OCI-LY7 (cell line): ENCODE measurements at regions of chr12 and their contacts with region 1.

Region 1: GRCh38 chr12:45762185-45763110 is 32.9 kb downstream of the ARID2 start:
- DNase-seq: peak; percentile 26
- H3K4me3 ChIP-seq: no peak overlapping the region
- H3K27ac ChIP-seq: no peak overlapping the region
- H3K4me1 ChIP-seq: no peaks in the 10 kb centered on the region
- CTCF ChIP-seq: peak; percentile 84

Region 2: GRCh38 chr12:45713078-45713477 is 49.4 kb before region 1 on chr12:
- CTCF ChIA-PET with region 1: no interaction called
- POLR2A ChIA-PET with region 1: no interaction called
- intact Hi-C with region 1: no loop called
- DNase-seq: no peak
- H3K4me3 ChIP-seq: no peak overlapping the region
- H3K27ac ChIP-seq: no peak overlapping the region
- H3K4me1 ChIP-seq: no peaks in the 10 kb centered on the region
- CTCF ChIP-seq: no peak

Region 3: DNA sequence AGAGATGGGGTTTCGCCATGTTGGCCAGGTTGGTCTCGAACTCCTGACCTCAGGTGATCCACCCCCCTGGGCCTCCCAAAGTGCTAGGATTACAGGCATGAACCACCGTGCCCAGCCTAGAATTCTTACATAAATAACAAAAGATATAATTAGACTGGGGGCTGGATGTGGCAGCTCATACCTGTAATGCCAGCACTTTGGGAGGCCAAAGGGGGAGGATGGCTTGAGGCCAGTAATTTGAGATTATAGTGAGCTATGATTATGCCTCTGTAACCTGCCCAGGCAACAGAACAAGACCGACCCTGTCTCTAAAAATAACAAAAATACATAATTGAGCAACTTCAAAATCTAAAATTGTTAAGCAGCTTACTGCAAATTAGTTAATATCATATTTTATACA is 97.5 kb after region 1 on chr12:
- CTCF ChIA-PET with region 1: no interaction called
- POLR2A ChIA-PET with region 1: no interaction called
- intact Hi-C with region 1: no loop called
- DNase-seq: no peak
- H3K4me3 ChIP-seq: no peak overlapping the region
- H3K27ac ChIP-seq: no peak overlapping the region
- H3K4me1 ChIP-seq: no peaks in the 10 kb centered on the region
- CTCF ChIP-seq: no peak

Region 4: GRCh38 chr12:46005151-46005797 is 242.8 kb after region 1 on chr12:
- CTCF ChIA-PET with region 1: no interaction called
- POLR2A ChIA-PET with region 1: no interaction called
- intact Hi-C with region 1: loop called (anchors 5 kb)
- DNase-seq: peak; percentile 32
- H3K4me3 ChIP-seq: no peak overlapping the region
- H3K27ac ChIP-seq: no peak overlapping the region
- H3K4me1 ChIP-seq: no peaks in the 10 kb centered on the region
- CTCF ChIP-seq: peak; percentile 83